ENCODE measurements at regions of chr14 and their contacts with region 1.

Region 1: GRCh38 chr14:21476925-21477681 is at the starts of genes RAB2B and TOX4:
- DNase-seq: peak; percentile 86 to 99 (median 95)
- ATAC-seq: peak; percentile 94 to 99 (median 97)
- H3K4me3 ChIP-seq: peak within 1 kb of the TSS; percentile 77 to 95
- H3K4me3 Mint-ChIP-seq: peak within 1 kb of the TSS; percentile 97 to 100 (median 100)
- H3K27ac ChIP-seq: peak within 1 kb of the TSS; percentile 89
- H3K27ac Mint-ChIP-seq: peak within 1 kb of the TSS; percentile 99
- H3K4me1 ChIP-seq: peaks cover 15 to 16% of the 10 kb centered on the region in 2 experiments
- H3K4me1 Mint-ChIP-seq: peaks cover 45 to 57% (median 51%) of the 10 kb centered on the region in 3 donors
- H3K27me3 ChIP-seq: no peaks in the 10 kb centered on the region
- H3K27me3 Mint-ChIP-seq: no peaks in the 10 kb centered on the region
- total RNA-seq, gene RAB2B: 23.6 to 33.7 (median 27.6) TPM
- total RNA-seq, gene TOX4: 68.7 to 95.6 (median 78.9) TPM

Region 2: GRCh38 chr14:21269252-21270046 is 207.7 kb before region 1 on chr14 and contains the start of gene HNRNPC:
- CTCF ChIA-PET with region 1: no interaction called
- POLR2A ChIA-PET with region 1: interaction called, 11 to 14 read pairs
- DNase-seq: peak; percentile 99 to 100 (median 100)
- ATAC-seq: peak; percentile 90 to 91 (median 91)
- H3K4me3 ChIP-seq: peak within 1 kb of the TSS; percentile 91 to 92
- H3K4me3 Mint-ChIP-seq: peak within 1 kb of the TSS; percentile 90 to 100 (median 100)
- H3K27ac ChIP-seq: peak within 1 kb of the TSS; percentile 97
- H3K27ac Mint-ChIP-seq: peak within 1 kb of the TSS; percentile 100
- H3K4me1 ChIP-seq: peaks cover 23 to 30% of the 10 kb centered on the region in 2 experiments
- H3K4me1 Mint-ChIP-seq: peaks cover 36 to 45% (median 38%) of the 10 kb centered on the region in 3 donors
- H3K27me3 ChIP-seq: no peaks in the 10 kb centered on the region
- H3K27me3 Mint-ChIP-seq: no peaks in the 10 kb centered on the region
- total RNA-seq, gene HNRNPC: 417 to 530 (median 441) TPM

Region 3: DNA sequence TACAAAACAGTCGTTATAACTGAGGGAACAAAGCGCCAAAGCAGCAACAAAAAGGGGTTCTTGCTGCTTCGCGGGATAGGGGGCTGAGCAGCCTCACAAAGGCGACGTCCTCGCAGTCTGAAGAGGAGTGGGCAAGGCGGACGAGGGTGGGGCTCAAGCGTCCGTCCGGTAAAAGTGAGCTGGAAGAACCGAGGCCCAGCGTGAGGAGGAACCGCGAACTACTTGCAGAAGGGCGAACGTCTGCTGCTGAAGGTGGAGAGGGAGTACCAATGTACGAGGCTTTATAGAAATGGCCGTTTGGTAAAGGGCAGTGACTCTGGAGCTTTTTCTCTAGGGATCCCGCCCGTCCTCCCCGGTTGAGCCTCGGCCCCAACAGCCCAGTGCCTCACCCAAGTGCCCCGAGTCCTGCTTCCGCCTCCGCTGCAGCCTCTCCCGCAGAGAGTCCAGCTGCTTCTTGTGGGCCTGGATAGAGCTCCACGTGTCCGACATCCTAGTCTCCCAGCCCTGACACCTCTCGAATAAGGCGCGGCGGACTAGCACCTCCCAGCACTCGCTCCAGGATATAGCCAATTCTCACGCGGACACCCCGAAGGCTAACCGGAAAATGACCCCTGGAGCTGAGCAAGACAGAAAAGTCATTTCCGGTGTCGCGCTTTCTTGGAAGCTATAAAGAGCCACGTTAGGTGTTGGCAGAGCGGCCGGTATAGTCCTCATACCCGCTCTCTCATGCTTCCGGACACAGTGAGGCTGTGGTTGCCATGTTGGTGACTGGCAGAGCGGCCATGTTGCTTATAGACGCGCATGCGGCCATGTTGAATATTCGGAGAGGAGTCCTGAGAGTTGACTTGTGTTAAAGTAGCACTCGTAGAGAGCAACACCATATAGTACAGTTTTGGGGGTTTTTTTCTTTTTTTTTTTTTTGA is 33.9 kb after region 1 on chr14 and contains the start of gene METTL3:
- CTCF ChIA-PET with region 1: interaction called, 6 to 13 read pairs
- POLR2A ChIA-PET with region 1: interaction called in 1 of 2 experiments, 5 read pairs
- DNase-seq: peak; percentile 84 to 98 (median 95)
- ATAC-seq: peak; percentile 99 to 100 (median 100)
- H3K4me3 ChIP-seq: peak within 1 kb of the TSS; percentile 78 to 89
- H3K4me3 Mint-ChIP-seq: peak within 1 kb of the TSS; percentile 98 to 99 (median 99)
- H3K27ac ChIP-seq: peak within 1 kb of the TSS; percentile 85
- H3K27ac Mint-ChIP-seq: peak within 1 kb of the TSS; percentile 96 to 98
- H3K4me1 ChIP-seq: peaks cover 14 to 25% of the 10 kb centered on the region in 2 experiments
- H3K4me1 Mint-ChIP-seq: peaks cover 40 to 45% (median 41%) of the 10 kb centered on the region in 3 donors
- H3K27me3 ChIP-seq: peaks cover 0 to 2% of the 10 kb centered on the region in 2 experiments
- H3K27me3 Mint-ChIP-seq: no peaks in the 10 kb centered on the region
- total RNA-seq, gene METTL3: 48.0 to 94.6 (median 91.6) TPM

Measured in T-cell (primary cell).